ENCODE measurements at regions of chr1 and their contacts with region 1.

Region 1: GRCh38 chr1:205711104-205712020 is 31.1 kb upstream of the SLC45A3 start:
- DNase-seq: peak in 12 of 14 experiments; percentile 16 to 87 (median 47)
- ATAC-seq: peak; percentile 95
- H3K4me3 ChIP-seq: no peak overlapping the region
- H3K4me3 Mint-ChIP-seq: no peak overlapping the region
- H3K27ac ChIP-seq: no peak overlapping the region
- H3K27ac Mint-ChIP-seq: peak overlapping the region; percentile 47
- H3K4me1 ChIP-seq: no peaks in the 10 kb centered on the region
- H3K4me1 Mint-ChIP-seq: peaks cover 40% of the 10 kb centered on the region
- H3K27me3 ChIP-seq: no peaks in the 10 kb centered on the region
- H3K27me3 Mint-ChIP-seq: no peaks in the 10 kb centered on the region
- CTCF ChIP-seq: peak; percentile 91

Region 2: GRCh38 chr1:205472737-205473441 is 238.5 kb before region 1 on chr1:
- CTCF ChIA-PET with region 1: no interaction called
- POLR2A ChIA-PET with region 1: no interaction called
- intact Hi-C with region 1: no loop called
- DNase-seq: no peak
- ATAC-seq: no peak
- H3K4me3 ChIP-seq: no peak overlapping the region
- H3K4me3 Mint-ChIP-seq: no peak overlapping the region
- H3K27ac ChIP-seq: no peak overlapping the region
- H3K27ac Mint-ChIP-seq: no peak overlapping the region
- H3K4me1 ChIP-seq: no peaks in the 10 kb centered on the region
- H3K4me1 Mint-ChIP-seq: no peaks in the 10 kb centered on the region
- H3K27me3 ChIP-seq: peaks cover 9 to 30% of the 10 kb centered on the region in 2 experiments
- H3K27me3 Mint-ChIP-seq: peaks cover 69% of the 10 kb centered on the region
- CTCF ChIP-seq: no peak

Region 3: DNA sequence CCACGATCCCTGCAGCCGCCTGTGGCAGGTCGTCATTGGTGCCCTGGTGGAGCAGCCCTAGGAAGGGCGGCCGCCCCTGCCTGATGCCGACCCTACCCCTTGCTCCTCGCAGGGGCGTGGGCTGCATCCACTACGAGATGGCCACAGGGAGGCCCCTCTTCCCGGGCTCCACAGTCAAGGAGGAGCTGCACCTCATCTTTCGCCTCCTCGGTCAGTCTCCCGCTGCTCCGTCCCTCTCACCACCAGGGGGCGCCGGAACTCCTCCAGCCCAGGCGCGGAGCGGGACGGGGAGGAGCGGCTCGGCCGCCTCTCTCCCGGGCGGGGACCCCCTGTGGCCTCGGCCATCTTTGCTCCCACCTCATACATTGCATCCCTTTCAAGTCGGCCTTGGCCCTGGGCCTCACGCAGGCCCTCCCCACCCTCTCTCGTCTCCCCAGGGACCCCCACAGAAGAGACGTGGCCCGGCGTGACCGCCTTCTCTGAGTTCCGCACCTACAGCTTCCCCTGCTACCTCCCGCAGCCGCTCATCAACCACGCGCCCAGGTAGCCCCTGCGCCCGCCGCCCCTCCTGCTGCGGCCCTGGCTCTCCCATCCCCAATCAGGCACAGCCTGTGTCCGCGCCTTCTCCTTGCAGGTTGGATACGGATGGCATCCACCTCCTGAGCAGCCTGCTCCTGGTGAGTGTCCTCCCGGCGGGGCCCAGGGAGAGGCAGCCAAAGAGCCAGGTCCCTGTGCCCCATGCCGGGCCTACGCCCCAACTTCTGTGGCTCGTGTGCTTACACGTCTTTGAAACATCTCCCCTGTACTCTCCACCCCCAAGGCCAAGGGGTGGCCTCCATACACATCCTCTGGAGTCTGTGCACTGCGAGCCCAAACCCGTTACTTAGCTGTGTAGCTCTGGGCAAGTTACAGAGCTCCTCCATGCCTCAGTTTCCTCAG is 182.2 kb before region 1 on chr1:
- CTCF ChIA-PET with region 1: interaction called, 9 read pairs
- POLR2A ChIA-PET with region 1: no interaction called
- intact Hi-C with region 1: loop called (anchors 1 to 2 kb)
- DNase-seq: peak; percentile 62 to 89 (median 80)
- ATAC-seq: peak; percentile 85
- H3K4me3 ChIP-seq: peak overlapping the region; percentile 32
- H3K4me3 Mint-ChIP-seq: no peak overlapping the region
- H3K27ac ChIP-seq: no peak overlapping the region
- H3K27ac Mint-ChIP-seq: no peak overlapping the region
- H3K4me1 ChIP-seq: peaks cover 9% of the 10 kb centered on the region
- H3K4me1 Mint-ChIP-seq: no peaks in the 10 kb centered on the region
- H3K27me3 ChIP-seq: no peaks in the 10 kb centered on the region
- H3K27me3 Mint-ChIP-seq: no peaks in the 10 kb centered on the region
- CTCF ChIP-seq: peak; percentile 85

Region 4: GRCh38 chr1:205783904-205784303 is 72.5 kb after region 1 on chr1:
- CTCF ChIA-PET with region 1: interaction called, 8 read pairs
- POLR2A ChIA-PET with region 1: no interaction called
- intact Hi-C with region 1: loop called in 1 of 2 experiments (anchors 1 kb)
- DNase-seq: no peak
- ATAC-seq: no peak
- H3K4me3 ChIP-seq: no peak overlapping the region
- H3K4me3 Mint-ChIP-seq: no peak overlapping the region
- H3K27ac ChIP-seq: no peak overlapping the region
- H3K27ac Mint-ChIP-seq: no peak overlapping the region
- H3K4me1 ChIP-seq: peaks cover 8% of the 10 kb centered on the region
- H3K4me1 Mint-ChIP-seq: peaks cover 7% of the 10 kb centered on the region
- H3K27me3 ChIP-seq: no peaks in the 10 kb centered on the region
- H3K27me3 Mint-ChIP-seq: no peaks in the 10 kb centered on the region
- CTCF ChIP-seq: no peak

Measured in CD4-positive, alpha-beta T cell (primary cell).